Mammary epithelial cell (primary cell): ENCODE measurements at regions of chr4 and their contacts with region 1.

Region 1: GRCh38 chr4:102263011-102263787 is 82.1 kb downstream of the SLC39A8 start:
- DNase-seq: peak; percentile 70
- H3K4me3 ChIP-seq: no peak overlapping the region
- H3K27ac ChIP-seq: no peak overlapping the region
- H3K4me1 ChIP-seq: no peaks in the 10 kb centered on the region
- H3K27me3 ChIP-seq: no peaks in the 10 kb centered on the region
- CTCF ChIP-seq: peak; percentile 50 to 62

Region 2: GRCh38 chr4:100907465-100908454 is 1355.4 kb before region 1 on chr4:
- CTCF ChIA-PET with region 1: no interaction called
- dilution Hi-C with region 1: no loop called
- in situ Hi-C with region 1: no loop called
- intact Hi-C with region 1: loop called (anchors 5 kb)
- DNase-seq: peak; percentile 23
- H3K4me3 ChIP-seq: no peak overlapping the region
- H3K27ac ChIP-seq: no peak overlapping the region
- H3K4me1 ChIP-seq: no peaks in the 10 kb centered on the region
- H3K27me3 ChIP-seq: no peaks in the 10 kb centered on the region
- CTCF ChIP-seq: peak; percentile 36 to 45